Endothelial cell of umbilical vein (primary cell): ENCODE measurements at regions of chr4 and their contacts with region 1.

Region 1: GRCh38 chr4:183268556-183268955 is 51.5 kb downstream of the CLDN22 start:
- DNase-seq: no peak
- H3K4me3 ChIP-seq: no peak overlapping the region
- H3K27ac ChIP-seq: no peak overlapping the region
- H3K4me1 ChIP-seq: no peaks in the 10 kb centered on the region
- H3K27me3 ChIP-seq: no peaks in the 10 kb centered on the region
- CTCF ChIP-seq: no peak
- POLR2A ChIP-seq: no peak

Region 2: DNA sequence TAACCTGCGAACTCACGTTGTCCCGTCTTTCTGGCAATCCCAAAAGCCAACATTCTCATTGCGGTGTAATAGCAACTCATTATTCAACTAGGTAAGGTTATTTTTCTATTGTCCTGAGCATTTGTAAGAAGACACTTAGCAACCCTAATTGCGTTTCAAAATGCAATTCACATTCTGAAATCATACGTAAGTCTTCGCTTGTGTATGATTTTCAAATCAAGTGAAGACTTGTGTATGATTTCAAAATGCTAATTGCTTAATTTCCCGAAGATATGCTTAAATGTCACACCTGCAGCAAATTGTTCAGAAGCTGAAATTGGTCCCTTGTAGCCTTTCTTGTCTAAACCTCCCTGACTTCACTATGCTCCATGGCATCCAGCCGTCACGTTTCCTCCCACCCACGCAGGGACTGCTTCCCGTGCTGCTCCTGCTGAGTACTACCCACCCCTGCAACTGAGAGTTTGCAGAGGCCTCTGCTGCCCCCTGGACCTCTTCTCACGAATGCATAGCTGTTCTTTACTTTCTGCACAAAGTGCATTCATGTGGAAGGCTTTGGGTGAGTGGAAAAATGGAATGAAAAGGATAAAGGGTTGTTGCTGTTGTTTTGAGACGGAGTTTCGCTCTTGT is 94.5 kb after region 1 on chr4:
- CTCF ChIA-PET with region 1: interaction called, 12 read pairs
- POLR2A ChIA-PET with region 1: no interaction called
- dilution Hi-C with region 1: no loop called
- intact Hi-C with region 1: no loop called
- DNase-seq: peak; percentile 52
- H3K4me3 ChIP-seq: no peak overlapping the region
- H3K27ac ChIP-seq: no peak overlapping the region
- H3K4me1 ChIP-seq: peaks cover 8% of the 10 kb centered on the region
- H3K27me3 ChIP-seq: no peaks in the 10 kb centered on the region
- CTCF ChIP-seq: peak in 1 of 2 donors; percentile 34
- POLR2A ChIP-seq: no peak